Left cardiac atrium (tissue), 4 donors: ENCODE measurements at regions of chr12 and their contacts with region 1.

Region 1: GRCh38 chr12:22100958-22101748 is 55.1 kb downstream of the CMAS start:
- DNase-seq: peak; percentile 28
- ATAC-seq: peak; percentile 68 to 75

Region 2: GRCh38 chr12:22443379-22444316 is 342.5 kb after region 1 on chr12:
- intact Hi-C with region 1: loop called in 1 of 2 experiments (anchors 5 kb)
- DNase-seq: peak; percentile 50
- ATAC-seq: peak; percentile 96 to 98